ENCODE measurements at regions of chr1 and their contacts with region 1.

Region 1: DNA sequence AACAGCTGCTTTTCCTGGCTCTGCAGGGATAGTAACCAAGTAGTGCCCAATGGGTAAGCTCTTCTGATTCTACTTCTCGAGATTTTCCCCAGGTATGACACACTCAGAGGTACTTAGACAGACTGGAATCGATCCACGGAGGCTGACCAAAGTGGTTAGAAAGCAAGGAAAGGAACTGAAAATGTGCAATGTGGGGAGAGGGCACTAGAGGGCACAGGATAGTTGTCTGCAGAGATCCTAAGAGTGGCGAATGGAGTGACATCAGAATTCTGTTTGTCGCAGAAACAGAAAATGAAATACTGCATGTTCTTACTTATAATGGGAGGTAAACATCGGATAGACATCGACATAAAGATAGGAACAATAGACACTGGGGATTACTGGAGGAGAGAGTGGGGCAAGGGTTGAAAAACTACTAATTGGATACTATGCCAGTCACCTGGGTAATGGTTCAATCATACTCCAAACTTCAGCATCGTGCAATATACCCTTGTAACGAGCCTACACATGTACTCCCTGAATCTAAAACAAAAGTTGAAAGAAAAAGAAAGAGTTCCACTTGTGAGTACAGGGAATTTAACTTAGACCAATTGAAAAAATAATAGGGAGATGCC is 23.3 kb downstream of the CYP2J2 start:
- DNase-seq: peak in 1 of 2 experiments; percentile 32
- H3K4me3 ChIP-seq: no peak overlapping the region
- H3K4me3 Mint-ChIP-seq: no peak overlapping the region
- H3K27ac Mint-ChIP-seq: no peak overlapping the region
- H3K4me1 ChIP-seq: peaks cover 5% of the 10 kb centered on the region; the same call in 1 of the 2 replicates
- H3K4me1 Mint-ChIP-seq: peaks cover 7% of the 10 kb centered on the region
- H3K27me3 ChIP-seq: no peaks in the 10 kb centered on the region
- H3K27me3 Mint-ChIP-seq: peaks cover 2% of the 10 kb centered on the region
- CTCF ChIP-seq: peak; percentile 46 to 53

Region 2: GRCh38 chr1:59879574-59879973 is 23.7 kb before region 1 on chr1:
- CTCF ChIA-PET with region 1: no interaction called
- POLR2A ChIA-PET with region 1: no interaction called
- intact Hi-C with region 1: loop called (anchors 1 kb)
- DNase-seq: peak; percentile 67 to 70
- H3K4me3 ChIP-seq: no peak overlapping the region
- H3K4me3 Mint-ChIP-seq: no peak overlapping the region
- H3K27ac Mint-ChIP-seq: no peak overlapping the region
- H3K4me1 ChIP-seq: no peaks in the 10 kb centered on the region
- H3K4me1 Mint-ChIP-seq: no peaks in the 10 kb centered on the region
- H3K27me3 ChIP-seq: no peaks in the 10 kb centered on the region
- H3K27me3 Mint-ChIP-seq: no peaks in the 10 kb centered on the region
- CTCF ChIP-seq: peak; percentile 39 to 41

Measured in Caco-2 (cell line).